Activated naive CD8-positive, alpha-beta T cell treated with anti-CD3 and anti-CD28 coated beads, Interleukin-2, amount 10 ng/mL, durations not matched to agents 7 days and 5 days (primary cell): ENCODE measurements at regions of chr10 and their contacts with region 1.

Region 1: GRCh38 chr10:47165711-47166524 is 134.1 kb upstream of the GDF10 start:
- DNase-seq: peak; percentile 67
- ATAC-seq: peak; percentile 93
- H3K4me3 Mint-ChIP-seq: peak overlapping the region; percentile 80
- H3K27ac Mint-ChIP-seq: peak overlapping the region; percentile 90
- H3K4me1 Mint-ChIP-seq: peaks cover 19% of the 10 kb centered on the region
- H3K27me3 Mint-ChIP-seq: peaks cover 2% of the 10 kb centered on the region

Region 2: GRCh38 chr10:47179291-47179647 is 13.4 kb after region 1 on chr10:
- POLR2A ChIA-PET with region 1: interaction called, 15 read pairs
- DNase-seq: no peak
- ATAC-seq: peak; percentile 71
- H3K4me3 Mint-ChIP-seq: no peak overlapping the region
- H3K27ac Mint-ChIP-seq: no peak overlapping the region
- H3K4me1 Mint-ChIP-seq: no peaks in the 10 kb centered on the region
- H3K27me3 Mint-ChIP-seq: no peaks in the 10 kb centered on the region